ENCODE measurements at regions of chr1 and their contacts with region 1.

Region 1: DNA sequence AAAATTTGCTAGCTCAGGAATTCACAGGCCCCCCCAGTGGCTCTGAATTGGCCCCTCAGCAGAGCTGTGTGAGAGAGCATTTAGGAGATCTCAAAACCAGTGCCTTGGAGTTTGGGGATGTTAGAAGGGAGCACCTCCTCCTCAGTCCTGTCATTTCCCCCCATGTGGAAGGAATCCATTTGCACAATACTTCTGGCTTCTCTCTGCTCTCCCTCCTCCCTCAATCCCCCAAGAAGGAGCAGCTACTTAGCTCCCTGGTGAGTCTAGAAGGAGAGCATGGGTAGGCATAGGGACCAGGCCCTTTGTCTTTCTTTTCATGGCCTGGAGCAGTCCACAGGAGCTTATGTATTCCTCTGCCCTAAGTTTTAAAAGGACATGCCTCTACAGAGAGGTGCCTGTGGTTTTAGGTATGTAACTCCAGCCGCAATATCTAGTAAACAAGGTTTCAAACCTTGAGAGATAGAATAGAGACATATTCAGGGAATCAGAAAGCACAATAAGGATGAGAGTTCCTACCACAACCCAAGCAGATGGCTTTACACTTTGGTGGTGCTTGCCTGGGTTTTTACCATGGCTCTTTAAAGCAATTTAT is 199.4 kb downstream of the FCRL5 start:
- DNase-seq: no peak
- H3K4me3 Mint-ChIP-seq: no peak overlapping the region
- H3K27ac Mint-ChIP-seq: no peak overlapping the region
- H3K4me1 Mint-ChIP-seq: no peaks in the 10 kb centered on the region
- H3K27me3 Mint-ChIP-seq: peaks cover 19% of the 10 kb centered on the region
- CTCF ChIP-seq: no peak

Region 2: GRCh38 chr1:157363660-157364140 is 10.8 kb after region 1 on chr1:
- CTCF ChIA-PET with region 1: interaction called, 111 read pairs
- POLR2A ChIA-PET with region 1: no interaction called
- intact Hi-C with region 1: no loop called
- DNase-seq: peak; percentile 73
- H3K4me3 Mint-ChIP-seq: no peak overlapping the region
- H3K27ac Mint-ChIP-seq: no peak overlapping the region
- H3K4me1 Mint-ChIP-seq: peaks cover 8% of the 10 kb centered on the region
- H3K27me3 Mint-ChIP-seq: peaks cover 13% of the 10 kb centered on the region
- CTCF ChIP-seq: peak; percentile 75